ENCODE measurements at regions of chr20 and their contacts with region 1.

Region 1: DNA sequence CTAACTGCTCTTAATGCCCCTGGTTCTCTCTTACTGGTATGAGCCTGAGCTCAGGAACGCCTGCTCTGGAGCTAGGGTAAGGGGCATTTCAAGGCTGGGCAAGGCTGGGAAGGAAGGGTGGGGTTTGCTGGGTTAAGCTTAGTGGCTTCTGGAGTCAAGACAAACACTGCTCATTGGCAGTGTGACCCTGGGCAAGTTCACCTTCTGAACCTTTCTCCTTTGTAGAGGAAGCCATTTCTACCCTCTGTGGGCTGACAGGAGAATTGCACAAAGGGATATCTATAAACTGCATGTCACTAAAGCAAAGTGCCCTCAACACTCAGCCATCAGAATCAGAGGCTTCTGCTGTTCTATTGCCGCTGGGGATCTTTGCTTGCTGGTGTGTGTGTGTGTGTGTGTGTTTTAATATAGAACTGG is 20.3 kb upstream of the LRRN4 start:
- DNase-seq: no peak
- ATAC-seq: no peak
- H3K4me3 ChIP-seq: no peak overlapping the region
- H3K27ac ChIP-seq: no peak overlapping the region
- H3K4me1 ChIP-seq: peaks cover 6 to 8% of the 10 kb centered on the region in 2 donors
- H3K27me3 ChIP-seq: no peaks in the 10 kb centered on the region
- CTCF ChIP-seq: no peak
- POLR2A ChIP-seq: no peak

Region 2: DNA sequence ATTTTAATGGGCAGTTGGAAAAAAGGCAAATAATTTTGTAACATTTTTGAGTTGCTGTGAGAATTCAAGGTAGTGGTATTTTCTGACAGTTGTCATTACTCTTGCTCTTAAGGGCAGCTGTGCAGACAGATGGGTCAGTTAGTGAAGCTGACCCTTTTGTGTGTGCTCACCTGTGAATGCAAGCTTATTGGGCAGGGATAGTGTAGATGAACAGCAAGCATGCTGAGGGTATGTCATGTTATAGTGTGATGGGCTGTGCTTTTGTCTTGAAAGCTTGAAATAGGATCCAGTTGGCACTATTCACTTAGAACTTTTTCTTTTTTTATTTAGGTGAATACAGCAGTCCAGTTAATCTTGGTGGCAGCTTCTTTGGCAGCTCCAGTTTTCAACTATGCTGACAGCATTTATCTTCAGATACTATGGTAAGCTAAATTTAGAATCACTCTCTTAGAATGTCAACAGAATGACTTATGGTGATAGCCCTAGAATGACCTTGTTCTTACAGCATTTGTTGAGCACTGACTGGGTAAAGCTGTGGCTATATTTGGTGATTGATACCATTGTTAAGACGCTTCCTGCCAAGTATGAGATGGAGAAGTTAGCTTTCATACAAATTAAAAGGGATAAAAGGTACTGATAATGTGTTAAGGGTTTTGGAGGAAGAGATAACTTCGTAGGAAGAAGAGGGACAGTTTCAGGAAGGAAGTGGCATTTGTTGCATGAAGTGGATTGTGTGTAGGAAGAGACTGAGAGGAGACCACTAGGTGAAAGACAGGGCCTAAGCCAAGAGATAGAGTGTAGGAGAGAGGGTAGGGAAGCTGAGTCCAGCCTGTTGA is 39.8 kb before region 1 on chr20:
- in situ Hi-C with region 1: no loop called
- intact Hi-C with region 1: loop called (anchors 5 kb)
- DNase-seq: no peak
- ATAC-seq: peak; percentile 93 to 98
- H3K4me3 ChIP-seq: no peak overlapping the region
- H3K27ac ChIP-seq: peak overlapping the region; percentile 59 to 82 (median 69)
- H3K4me1 ChIP-seq: peaks cover 19 to 33% of the 10 kb centered on the region in 2 donors
- H3K27me3 ChIP-seq: no peaks in the 10 kb centered on the region
- CTCF ChIP-seq: no peak
- POLR2A ChIP-seq: no peak

Region 3: GRCh38 chr20:6277661-6278240 is 203.6 kb after region 1 on chr20:
- in situ Hi-C with region 1: no loop called
- intact Hi-C with region 1: no loop called
- DNase-seq: no peak
- ATAC-seq: no peak
- H3K4me3 ChIP-seq: no peak overlapping the region
- H3K27ac ChIP-seq: no peak overlapping the region
- H3K4me1 ChIP-seq: no peaks in the 10 kb centered on the region
- H3K27me3 ChIP-seq: no peaks in the 10 kb centered on the region
- CTCF ChIP-seq: no peak
- POLR2A ChIP-seq: no peak

Measured in gastrocnemius medialis (tissue), 4 donors.